ENCODE measurements at regions of chr1 and their contacts with region 1.

Region 1: DNA sequence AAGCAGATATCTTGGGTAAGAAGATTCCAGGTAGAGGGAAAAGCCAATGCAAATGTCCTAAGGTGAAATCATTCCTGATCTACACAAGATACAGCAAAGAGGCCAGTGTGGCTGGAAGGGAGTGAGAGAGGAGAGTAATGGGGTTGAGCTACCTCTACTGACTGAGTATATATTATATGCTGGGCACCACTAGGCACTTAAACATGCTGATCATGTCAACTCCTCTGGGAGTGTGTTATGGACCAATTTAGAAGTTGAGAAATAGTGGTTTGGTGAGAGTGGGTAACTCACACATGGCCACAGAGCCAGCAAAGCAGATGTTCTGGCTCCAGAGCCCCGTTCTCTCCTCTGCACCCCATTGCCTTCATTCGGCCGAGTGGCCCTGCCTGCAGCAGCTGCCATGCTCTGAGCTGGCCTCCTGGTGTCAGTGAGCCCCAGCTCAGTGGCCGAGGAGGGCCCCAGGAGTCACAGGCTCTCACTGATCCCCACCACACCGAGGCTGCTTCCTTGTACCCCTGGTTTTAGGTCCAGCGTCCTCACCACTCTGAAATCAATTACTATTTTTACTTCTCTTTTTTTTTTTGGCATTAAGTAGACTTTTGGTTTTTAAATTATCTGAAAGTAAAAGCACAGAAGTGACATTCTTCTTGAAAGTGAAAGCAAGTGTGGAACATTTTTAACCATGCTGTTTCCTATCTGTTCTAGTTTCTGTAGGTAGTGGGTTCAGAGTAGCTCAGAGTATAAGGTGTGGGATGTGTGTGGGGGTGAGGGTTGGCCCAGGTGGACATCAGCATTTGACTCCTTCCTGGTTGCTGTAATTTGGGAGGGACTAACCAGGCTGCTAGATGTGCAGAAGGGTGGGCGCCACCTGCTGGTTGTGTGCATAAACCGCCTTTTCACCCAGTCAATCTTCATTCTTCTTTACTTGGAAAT is 45.8 kb upstream of the CRNN start:
- DNase-seq: peak; percentile 77
- H3K4me3 ChIP-seq: peak overlapping the region in 2 of 4 donors; percentile 3 to 12
- H3K27ac ChIP-seq: peak overlapping the region in 1 of 4 donors; percentile 11
- H3K4me1 ChIP-seq: peaks cover 0 to 9% (median 3%) of the 10 kb centered on the region in 4 donors
- H3K27me3 ChIP-seq: no peaks in the 10 kb centered on the region
- CTCF ChIP-seq: peak; percentile 43 to 75 (median 66)
- EP300 ChIP-seq: no peak
- POLR2A ChIP-seq: no peak

Region 2: GRCh38 chr1:152189657-152190442 is 270.0 kb before region 1 on chr1:
- intact Hi-C with region 1: loop called (anchors 2 kb)
- DNase-seq: no peak
- H3K4me3 ChIP-seq: peak overlapping the region; percentile 52 to 67 (median 60)
- H3K27ac ChIP-seq: peak overlapping the region in 3 of 4 donors; percentile 53 to 76 (median 76)
- H3K4me1 ChIP-seq: peaks cover 0 to 23% (median 15%) of the 10 kb centered on the region in 4 donors
- H3K27me3 ChIP-seq: peaks cover 0 to 4% (median 0%) of the 10 kb centered on the region in 4 donors
- CTCF ChIP-seq: peak; percentile 57 to 65 (median 57)
- EP300 ChIP-seq: no peak
- POLR2A ChIP-seq: no peak

Region 3: GRCh38 chr1:152519851-152520250 is 60.0 kb after region 1 on chr1:
- intact Hi-C with region 1: no loop called
- DNase-seq: peak; percentile 77
- H3K4me3 ChIP-seq: no peak overlapping the region
- H3K27ac ChIP-seq: no peak overlapping the region
- H3K4me1 ChIP-seq: peaks cover 7 to 10% (median 9%) of the 10 kb centered on the region in 4 donors
- H3K27me3 ChIP-seq: peaks cover 0 to 32% (median 9%) of the 10 kb centered on the region in 4 donors
- CTCF ChIP-seq: no peak
- EP300 ChIP-seq: no peak
- POLR2A ChIP-seq: no peak

Measured in esophagus muscularis mucosa (tissue), 4 donors.